ENCODE measurements at regions of chr12 and their contacts with region 1.

Region 1: GRCh38 chr12:14384783-14385638 is 19.5 kb downstream of the ATF7IP start:
- DNase-seq: peak; percentile 98
- H3K4me3 ChIP-seq: peak overlapping the region; percentile 85
- H3K27ac ChIP-seq: peak overlapping the region; percentile 86
- H3K4me1 ChIP-seq: peaks cover 39% of the 10 kb centered on the region
- CTCF ChIP-seq: no peak

Region 2: DNA sequence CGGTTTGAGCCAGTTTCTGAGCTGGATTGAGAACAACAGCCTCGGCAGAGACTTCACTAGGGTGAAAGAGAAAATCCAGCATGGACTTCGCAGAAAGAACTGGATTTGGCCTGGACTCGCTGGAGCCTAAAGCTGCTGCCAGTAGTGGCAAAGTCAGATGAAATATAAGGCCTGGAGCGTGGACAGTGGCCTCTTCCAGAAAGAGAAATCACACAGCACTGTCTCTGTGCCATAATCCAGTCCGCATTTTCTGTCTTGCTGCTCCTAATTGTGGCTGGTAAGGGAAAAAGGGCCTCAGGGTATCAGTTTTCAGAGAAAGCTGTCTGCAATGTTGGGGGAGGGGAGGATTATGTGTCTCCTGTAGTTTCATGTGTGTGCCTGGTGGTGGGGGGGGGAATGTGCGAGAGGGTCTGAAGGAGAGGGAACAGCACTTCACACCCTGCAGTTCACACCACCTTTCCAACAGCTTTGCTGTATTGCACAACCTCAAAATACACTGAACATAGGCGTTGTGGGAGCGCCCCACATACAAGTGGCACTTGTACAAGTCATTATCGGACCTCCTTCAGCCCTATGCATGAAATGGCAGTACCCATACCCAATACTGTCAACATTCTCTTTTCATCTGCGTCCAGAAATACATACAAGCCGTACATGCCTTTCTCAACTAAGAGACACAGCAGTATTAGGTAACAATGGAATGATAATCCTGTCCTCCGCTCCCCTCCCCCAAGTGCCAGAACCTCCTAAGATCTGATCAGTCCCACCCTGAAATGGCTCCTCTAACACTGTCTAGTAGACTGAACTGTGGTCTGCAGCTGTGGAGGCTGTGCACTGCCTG is 127.1 kb before region 1 on chr12:
- CTCF ChIA-PET with region 1: no interaction called
- POLR2A ChIA-PET with region 1: interaction called, 15 read pairs
- intact Hi-C with region 1: loop called (anchors 1 kb)
- DNase-seq: peak; percentile 99
- H3K4me3 ChIP-seq: peak overlapping the region; percentile 56
- H3K27ac ChIP-seq: peak overlapping the region; percentile 98
- H3K4me1 ChIP-seq: peaks cover 76% of the 10 kb centered on the region
- CTCF ChIP-seq: peak; percentile 23; the same call in 1 of the 2 replicates

Region 3: DNA sequence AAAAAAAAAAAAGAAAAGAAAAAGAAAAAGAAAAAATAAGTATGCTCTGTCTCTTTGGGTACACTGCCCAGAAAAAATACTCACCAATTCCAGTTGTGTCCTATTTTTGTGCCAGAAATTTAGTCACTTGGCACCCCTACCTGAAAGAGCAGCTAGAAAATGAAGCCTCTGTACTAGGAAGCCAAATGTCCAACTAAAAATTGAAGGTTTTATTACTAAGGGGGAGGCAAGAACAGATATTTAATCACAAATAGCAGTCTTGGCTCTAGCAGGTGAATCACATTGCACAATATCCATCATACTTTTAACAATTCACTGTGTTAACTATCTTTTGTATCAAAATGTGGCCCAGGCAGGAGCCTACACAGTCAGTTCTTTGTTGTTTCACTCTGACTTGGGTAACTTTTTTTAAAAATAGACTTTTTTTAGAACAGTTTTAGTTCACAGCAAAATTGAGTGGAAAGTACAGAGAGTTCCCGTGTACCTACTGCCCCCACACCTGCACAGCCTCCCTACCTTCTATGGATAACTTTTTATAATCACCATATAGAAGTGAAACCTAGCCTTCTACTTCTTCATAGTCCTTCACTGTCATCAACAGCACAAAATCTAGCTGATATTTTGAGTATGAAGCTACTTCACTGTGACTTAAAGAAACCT is 106.6 kb before region 1 on chr12:
- CTCF ChIA-PET with region 1: no interaction called
- POLR2A ChIA-PET with region 1: interaction called, 20 read pairs
- intact Hi-C with region 1: loop called (anchors 1 kb)
- DNase-seq: peak; percentile 79
- H3K4me3 ChIP-seq: peak overlapping the region; percentile 5
- H3K27ac ChIP-seq: peak overlapping the region; percentile 95
- H3K4me1 ChIP-seq: peaks cover 88% of the 10 kb centered on the region
- CTCF ChIP-seq: no peak

Region 4: GRCh38 chr12:14373217-14373616 is 11.8 kb before region 1 on chr12:
- CTCF ChIA-PET with region 1: no interaction called
- POLR2A ChIA-PET with region 1: interaction called, 56 read pairs
- intact Hi-C with region 1: no loop called
- DNase-seq: no peak
- H3K4me3 ChIP-seq: no peak overlapping the region
- H3K27ac ChIP-seq: no peak overlapping the region
- H3K4me1 ChIP-seq: no peaks in the 10 kb centered on the region
- CTCF ChIP-seq: no peak

Region 5: GRCh38 chr12:14589169-14590004 is 204.4 kb after region 1 on chr12:
- CTCF ChIA-PET with region 1: no interaction called
- POLR2A ChIA-PET with region 1: no interaction called
- intact Hi-C with region 1: no loop called
- DNase-seq: no peak
- H3K4me3 ChIP-seq: no peak overlapping the region
- H3K27ac ChIP-seq: no peak overlapping the region
- H3K4me1 ChIP-seq: peaks cover 19% of the 10 kb centered on the region
- CTCF ChIP-seq: no peak

Region 6: GRCh38 chr12:14613718-14614117 is 228.7 kb after region 1 on chr12:
- CTCF ChIA-PET with region 1: no interaction called
- POLR2A ChIA-PET with region 1: interaction called, 3 read pairs
- intact Hi-C with region 1: loop called (anchors 5 kb)
- DNase-seq: peak; percentile 97
- H3K4me3 ChIP-seq: peak overlapping the region; percentile 59
- H3K27ac ChIP-seq: peak overlapping the region; percentile 99
- H3K4me1 ChIP-seq: peaks cover 59% of the 10 kb centered on the region
- CTCF ChIP-seq: no peak

Measured in OCI-LY7 (cell line).